Common myeloid progenitor, CD34-positive (primary cell): ENCODE measurements at regions of chr6 and their contacts with region 1.

Region 1: GRCh38 chr6:43951063-43951755 is 176.0 kb downstream of the MRPL14 start:
- DNase-seq: peak; percentile 63 to 77 (median 75)
- H3K4me3 ChIP-seq: no peak overlapping the region
- H3K27ac ChIP-seq: no peak overlapping the region
- H3K4me1 ChIP-seq: peaks cover 0 to 5% (median 0%) of the 10 kb centered on the region in 4 experiments
- H3K27me3 ChIP-seq: peaks cover 0 to 2% (median 0%) of the 10 kb centered on the region in 5 experiments

Region 2: DNA sequence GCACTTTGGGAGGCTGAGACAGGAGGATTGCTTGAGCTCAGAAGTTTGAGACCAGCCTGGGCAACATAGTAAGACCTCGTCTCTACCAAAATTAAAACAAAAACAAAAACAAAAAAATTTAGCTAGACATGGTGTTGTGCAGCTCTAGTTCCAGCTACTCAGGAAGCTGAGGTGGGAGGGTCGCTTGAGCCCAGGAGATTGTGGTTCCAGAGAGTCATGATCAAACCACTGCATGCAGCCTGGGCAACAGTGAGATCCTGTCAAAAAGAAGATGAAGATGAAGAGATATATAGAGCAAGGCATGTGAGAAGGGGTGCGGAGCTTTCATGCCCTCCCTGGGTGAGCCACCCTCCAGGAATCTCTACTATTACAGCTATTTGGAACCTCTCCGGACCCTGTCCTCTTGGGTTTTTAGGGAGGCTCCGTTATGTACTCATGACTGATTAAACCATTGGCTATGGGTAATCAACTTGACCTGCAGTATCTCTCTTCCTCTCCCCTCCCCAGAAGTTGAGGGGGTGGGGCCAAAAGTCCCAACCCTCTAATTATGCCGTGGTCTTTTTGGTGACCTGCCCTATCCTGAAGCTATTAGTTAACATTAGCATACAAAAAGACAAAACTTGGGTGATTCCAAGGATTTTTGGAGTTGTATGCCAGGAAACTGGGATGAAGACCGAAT is 366.2 kb before region 1 on chr6:
- CTCF ChIA-PET with region 1: no interaction called
- POLR2A ChIA-PET with region 1: no interaction called
- DNase-seq: peak in 2 of 3 donors; percentile 14 to 20
- H3K4me3 ChIP-seq: no peak overlapping the region
- H3K27ac ChIP-seq: no peak overlapping the region
- H3K4me1 ChIP-seq: peaks cover 0 to 3% (median 0%) of the 10 kb centered on the region in 4 experiments
- H3K27me3 ChIP-seq: no peaks in the 10 kb centered on the region

Region 3: DNA sequence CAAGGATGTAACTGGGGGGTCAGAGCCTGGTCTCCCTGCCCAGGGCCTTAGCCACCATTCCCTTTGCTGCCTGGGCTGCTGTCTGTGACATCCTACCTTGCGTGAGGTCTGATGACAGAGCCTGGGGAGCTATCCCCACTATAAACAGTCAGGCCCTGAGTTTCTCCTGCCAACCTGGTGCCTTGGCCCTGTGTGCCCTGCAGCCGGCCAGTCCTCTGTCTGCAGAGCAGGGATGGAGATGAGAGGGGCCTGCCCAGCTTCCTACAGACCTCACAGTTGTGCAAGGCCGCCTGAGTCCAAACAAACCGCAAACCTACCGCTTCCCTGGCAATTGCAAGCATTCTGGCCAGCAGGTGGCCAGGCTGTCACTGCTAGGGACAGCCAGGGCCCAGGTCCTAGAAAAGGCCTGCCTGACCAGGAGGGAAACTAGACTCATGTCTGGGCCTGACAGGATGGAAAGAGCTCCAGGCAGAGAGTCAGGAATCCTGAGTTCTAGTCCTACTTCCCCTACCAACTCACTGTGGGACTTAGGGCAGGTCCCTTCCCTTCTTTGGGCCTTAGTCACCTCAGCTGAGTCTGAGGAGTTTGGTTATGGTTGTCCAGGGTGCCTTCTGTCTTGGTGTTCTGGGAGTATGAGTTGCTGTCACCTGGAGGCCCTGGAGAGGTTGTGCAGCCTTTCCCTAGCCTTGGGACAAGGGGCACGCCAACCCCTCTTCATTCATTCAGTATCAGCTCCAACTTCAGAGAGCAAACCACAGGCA is 95.0 kb before region 1 on chr6:
- CTCF ChIA-PET with region 1: interaction called, 10 read pairs
- POLR2A ChIA-PET with region 1: no interaction called
- DNase-seq: peak in 2 of 3 donors; percentile 13 to 15
- H3K4me3 ChIP-seq: no peak overlapping the region
- H3K27ac ChIP-seq: no peak overlapping the region
- H3K4me1 ChIP-seq: no peaks in the 10 kb centered on the region
- H3K27me3 ChIP-seq: no peaks in the 10 kb centered on the region